ENCODE measurements at regions of chr20 and their contacts with region 1.

Region 1: GRCh38 chr20:33666293-33667244 is at the start of gene ACTL10:
- DNase-seq: peak; percentile 94
- CTCF ChIP-seq: peak; percentile 40

Region 2: DNA sequence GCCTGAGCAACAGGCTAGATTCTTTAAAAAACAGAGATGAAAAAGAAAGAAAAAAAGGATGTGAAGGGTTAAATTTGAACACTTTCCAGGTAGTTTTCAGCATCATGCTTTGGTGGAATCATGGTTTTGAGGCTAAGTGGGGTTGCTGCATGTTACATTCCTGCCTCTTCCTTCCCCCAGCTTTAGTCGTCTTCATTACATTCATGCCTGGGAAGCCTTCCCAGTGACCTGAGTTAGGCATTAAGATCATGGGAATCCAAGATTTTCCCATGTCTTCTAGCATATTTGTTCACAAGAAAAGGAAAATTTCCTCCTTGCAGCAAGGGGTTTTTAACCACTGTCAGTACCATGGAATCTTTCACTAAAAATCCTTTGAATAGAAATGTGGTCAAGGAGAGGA is 1915.4 kb before region 1 on chr20:
- CTCF ChIA-PET with region 1: no interaction called
- POLR2A ChIA-PET with region 1: interaction called, 11 read pairs
- DNase-seq: no peak
- CTCF ChIP-seq: no peak

Region 3: DNA sequence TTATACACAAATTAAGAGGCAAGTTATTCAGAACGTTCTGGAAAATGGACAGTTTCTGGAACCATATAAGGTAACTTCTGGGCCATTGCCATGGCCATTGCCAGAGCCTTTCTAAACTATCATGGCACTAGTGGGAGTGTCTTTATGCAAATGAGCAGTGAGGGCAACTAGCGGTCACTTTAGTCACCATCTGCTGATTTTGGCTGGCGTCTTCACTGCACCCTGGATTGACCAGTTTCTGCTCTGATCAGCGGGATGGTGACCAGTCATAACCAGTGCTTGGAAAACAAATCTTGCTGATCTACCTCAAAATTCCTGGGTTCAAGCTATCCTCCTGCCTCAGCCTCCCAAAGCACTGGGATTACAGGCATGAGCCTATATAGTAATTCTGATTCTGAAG is 215.7 kb before region 1 on chr20:
- CTCF ChIA-PET with region 1: interaction called, 21 read pairs
- POLR2A ChIA-PET with region 1: no interaction called
- DNase-seq: no peak
- CTCF ChIP-seq: no peak

Region 4: GRCh38 chr20:33653218-33653899 is 13.2 kb before region 1 on chr20:
- CTCF ChIA-PET with region 1: interaction called, 31 read pairs
- POLR2A ChIA-PET with region 1: interaction called, 12 read pairs
- DNase-seq: peak; percentile 79
- CTCF ChIP-seq: peak; percentile 73

Region 5: GRCh38 chr20:33686100-33686983 is 19.8 kb after region 1 on chr20 and contains the start of gene E2F1:
- CTCF ChIA-PET with region 1: interaction called, 61 read pairs
- POLR2A ChIA-PET with region 1: interaction called, 3 read pairs
- DNase-seq: peak; percentile 99
- CTCF ChIP-seq: peak; percentile 2